ENCODE measurements at regions of chr14 and their contacts with region 1.

Region 1: DNA sequence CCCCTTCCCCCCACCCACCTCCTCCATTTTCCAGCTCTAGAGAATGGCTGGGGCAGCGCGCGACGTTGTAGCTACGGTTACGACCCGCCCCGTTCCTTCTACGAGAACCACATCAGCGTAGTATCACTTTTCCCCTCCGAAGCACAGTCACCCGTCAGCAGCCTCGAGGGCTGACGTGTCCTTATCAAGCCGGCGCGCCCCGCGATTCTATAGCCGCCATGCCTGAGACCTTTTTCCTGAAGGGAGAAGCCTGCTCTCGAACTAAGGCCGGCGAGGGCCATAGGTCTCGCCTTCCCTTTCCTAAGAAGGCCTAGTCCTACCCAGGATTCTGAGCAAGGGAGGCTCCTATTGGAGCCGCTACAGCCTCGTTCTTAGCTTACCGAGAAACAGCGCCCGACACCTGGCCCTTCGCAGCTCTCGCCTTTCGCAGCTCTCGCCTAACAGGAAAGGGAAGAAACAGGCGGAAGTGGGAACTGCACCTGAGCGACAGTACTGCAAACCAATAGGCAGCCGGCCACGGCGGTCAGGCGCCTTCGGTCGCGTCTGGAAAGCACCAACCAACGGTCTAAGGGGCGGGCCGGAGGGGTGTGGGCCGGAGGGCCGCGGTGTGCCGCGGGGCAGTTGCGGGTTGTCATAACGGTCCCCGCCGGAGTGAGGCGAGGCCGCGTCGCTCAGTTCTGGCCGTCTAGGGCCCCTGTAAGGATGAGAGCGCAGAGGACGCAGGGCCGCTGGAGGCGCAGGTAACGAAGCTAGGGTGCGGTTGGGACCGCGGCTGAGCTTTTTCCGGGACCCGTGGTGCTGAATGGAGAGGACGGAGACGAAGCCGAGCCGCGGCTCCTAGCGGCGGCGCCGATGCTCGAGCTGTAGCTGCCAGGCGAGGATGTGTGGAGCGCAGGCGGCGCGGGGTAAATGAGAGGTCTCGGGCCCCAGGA is at the starts of genes MGAT2 and RPL36AL:
- DNase-seq: peak; percentile 98 to 99
- ATAC-seq: peak; percentile 94 to 98
- H3K4me3 ChIP-seq: peak within 1 kb of the TSS; percentile 78
- H3K27ac ChIP-seq: peak within 1 kb of the TSS; percentile 95 to 96
- H3K4me1 ChIP-seq: peaks cover 55% of the 10 kb centered on the region
- CTCF ChIP-seq: 0 out of 3 replicates have a peak, but pooled peaks have one; percentile 10
- EP300 ChIP-seq: no peak
- POLR2A ChIP-seq: peak; percentile 94
- RAD21 ChIP-seq: no peak
- polyA plus RNA-seq, gene MGAT2: 33.0 and 35.6 TPM in 2 replicates
- polyA plus RNA-seq, gene RPL36AL: 280 and 390 TPM in 2 replicates

Region 2: GRCh38 chr14:49585803-49586672 is 34.4 kb before region 1 on chr14 and contains the start of gene RPS29:
- CTCF ChIA-PET with region 1: interaction called, 6 read pairs
- POLR2A ChIA-PET with region 1: interaction called, 50 read pairs
- DNase-seq: peak; percentile 93 to 99
- ATAC-seq: peak; percentile 86 to 89
- H3K4me3 ChIP-seq: peak within 1 kb of the TSS; percentile 64
- H3K27ac ChIP-seq: peak within 1 kb of the TSS; percentile 86 to 96
- H3K4me1 ChIP-seq: peaks cover 30% of the 10 kb centered on the region
- CTCF ChIP-seq: no peak
- EP300 ChIP-seq: no peak
- POLR2A ChIP-seq: peak; percentile 78
- RAD21 ChIP-seq: no peak
- polyA plus RNA-seq, gene RPS29: 3,909 and 5,167 TPM in 2 replicates

Region 3: DNA sequence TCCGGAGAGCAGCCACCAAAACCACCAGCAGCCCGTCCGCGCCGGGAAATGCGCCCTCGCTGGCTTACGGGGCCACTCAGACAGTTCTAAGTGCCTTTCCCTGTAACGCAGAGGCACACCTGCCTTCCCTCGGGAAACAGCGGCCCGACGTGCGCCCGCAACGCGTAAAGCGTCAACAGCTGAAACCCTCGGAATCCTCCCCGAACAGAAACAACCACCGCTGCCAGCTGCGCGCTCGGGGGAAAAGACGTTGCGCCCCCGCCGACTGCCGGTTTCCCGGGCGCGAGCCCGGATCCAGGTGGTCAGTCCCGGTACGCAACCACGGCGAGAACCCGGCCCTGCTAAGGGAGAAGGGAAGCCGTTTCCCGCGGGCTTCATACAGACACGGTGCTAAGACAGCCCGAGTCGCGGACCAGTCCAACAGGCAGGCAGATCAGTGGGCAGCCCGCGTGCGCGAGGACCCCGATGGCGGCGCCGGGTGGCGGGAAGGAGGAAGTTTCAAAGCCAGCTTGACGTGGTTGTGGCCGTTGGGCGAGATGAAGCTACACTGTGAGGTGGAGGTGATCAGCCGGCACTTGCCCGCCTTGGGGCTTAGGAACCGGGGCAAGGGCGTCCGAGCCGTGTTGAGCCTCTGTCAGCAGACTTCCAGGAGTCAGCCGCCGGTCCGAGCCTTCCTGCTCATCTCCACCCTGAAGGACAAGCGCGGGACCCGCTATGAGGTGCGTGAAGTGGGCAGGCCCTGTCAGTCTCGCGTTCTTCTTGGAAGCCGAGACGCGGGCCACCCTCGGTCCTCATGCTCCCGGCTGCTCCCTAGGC is 21.8 kb before region 1 on chr14 and contains the start of gene LRR1:
- CTCF ChIA-PET with region 1: interaction called, 4 read pairs
- POLR2A ChIA-PET with region 1: interaction called, 23 read pairs
- DNase-seq: peak; percentile 79 to 91
- ATAC-seq: peak; percentile 89 to 90
- H3K4me3 ChIP-seq: peak within 1 kb of the TSS; percentile 62
- H3K27ac ChIP-seq: peak within 1 kb of the TSS; percentile 92 to 96
- H3K4me1 ChIP-seq: 0 out of 3 replicates have a peak, but pooled peaks cover 7% of the 10 kb centered on the region
- CTCF ChIP-seq: no peak
- EP300 ChIP-seq: no peak
- POLR2A ChIP-seq: peak; percentile 71
- RAD21 ChIP-seq: no peak
- polyA plus RNA-seq, gene LRR1: 34.6 and 50.7 TPM in 2 replicates

Region 4: DNA sequence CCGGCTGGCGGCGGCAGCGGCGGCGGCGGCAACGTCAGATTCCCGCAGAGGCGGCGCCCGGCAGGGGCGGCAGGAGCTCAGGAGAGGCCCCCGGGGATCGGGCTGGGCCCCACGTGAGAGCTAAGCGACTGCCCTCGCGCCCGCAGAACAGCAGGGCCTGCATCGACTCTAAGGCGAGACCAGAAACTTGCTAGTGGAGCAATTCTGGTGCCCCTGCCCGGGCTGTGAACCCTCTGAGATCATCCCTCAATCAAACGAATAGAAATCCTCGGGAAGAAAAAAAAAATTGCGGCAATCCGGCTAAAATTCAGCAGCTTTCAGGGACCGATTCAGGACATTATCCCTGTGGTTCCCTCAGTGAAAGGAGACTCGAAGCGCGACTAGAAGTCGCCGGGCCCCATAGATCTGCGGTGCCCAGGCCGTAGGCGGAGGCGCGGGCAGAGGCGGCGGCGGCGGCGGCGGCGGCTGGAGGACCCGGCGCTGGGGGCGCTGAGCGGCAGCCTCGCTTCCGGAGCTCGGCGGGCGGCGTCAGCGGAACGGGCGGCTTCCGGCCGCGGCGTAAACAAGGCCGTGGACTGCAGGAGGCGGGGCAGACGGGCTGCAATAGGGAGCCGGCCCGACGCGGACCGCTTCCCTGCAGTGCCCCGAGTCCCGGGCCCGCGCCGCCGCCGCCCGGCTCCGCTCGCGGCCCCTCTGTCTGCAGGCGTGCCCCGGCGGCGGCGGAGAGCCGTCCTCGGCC is 147.3 kb after region 1 on chr14 and contains the start of gene KLHDC2:
- CTCF ChIA-PET with region 1: interaction called, 4 read pairs
- POLR2A ChIA-PET with region 1: interaction called, 24 read pairs
- DNase-seq: peak; percentile 65 to 91
- ATAC-seq: peak; percentile 85 to 87
- H3K4me3 ChIP-seq: peak within 1 kb of the TSS; percentile 93
- H3K27ac ChIP-seq: peak within 1 kb of the TSS; percentile 94 to 96
- H3K4me1 ChIP-seq: peaks cover 33% of the 10 kb centered on the region
- CTCF ChIP-seq: peak; percentile 62
- EP300 ChIP-seq: no peak
- POLR2A ChIP-seq: peak; percentile 80
- RAD21 ChIP-seq: no peak; a peak in 1 of 5 replicates
- polyA plus RNA-seq, gene KLHDC2: 75.7 and 83.7 TPM in 2 replicates

Region 5: DNA sequence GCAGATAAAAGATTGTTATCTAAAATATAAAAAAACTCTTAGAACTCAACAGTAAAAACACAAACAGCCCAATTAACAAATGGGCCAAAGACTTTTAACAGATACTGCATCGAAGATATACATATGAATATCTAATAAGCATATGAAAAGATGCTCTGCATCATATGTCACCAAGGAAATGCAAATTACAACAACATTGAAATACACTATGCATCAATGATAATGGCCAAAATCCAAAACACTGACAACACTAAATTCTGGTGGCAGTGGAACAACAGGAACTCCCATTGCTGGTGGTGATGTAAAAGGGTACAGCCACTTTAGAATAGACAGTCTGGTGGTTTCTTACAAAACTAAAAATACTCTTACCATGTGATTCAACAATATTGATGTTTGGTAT is 188.3 kb after region 1 on chr14:
- CTCF ChIA-PET with region 1: no interaction called
- POLR2A ChIA-PET with region 1: no interaction called
- DNase-seq: no peak
- ATAC-seq: no peak
- H3K4me3 ChIP-seq: no peak overlapping the region
- H3K27ac ChIP-seq: no peak overlapping the region
- H3K4me1 ChIP-seq: no peaks in the 10 kb centered on the region
- CTCF ChIP-seq: no peak
- EP300 ChIP-seq: no peak
- POLR2A ChIP-seq: no peak
- RAD21 ChIP-seq: no peak